Dorsolateral prefrontal cortex (tissue), 120 donors: ENCODE measurements at regions of chr7 and their contacts with region 1.

Region 1: GRCh38 chr7:151181011-151181431 is 6.0 kb downstream of the ASB10 start:
- DNase-seq: peak in 3 of 10 donors; percentile 18 to 40 (median 24)
- H3K4me3 ChIP-seq: no peak overlapping the region
- H3K27ac ChIP-seq: no peak overlapping the region
- H3K27me3 ChIP-seq: peaks cover 0 to 5% (median 0%) of the 10 kb centered on the region in 45 donors
- CTCF ChIP-seq: no peak

Region 2: GRCh38 chr7:151110941-151111645 is 69.9 kb before region 1 on chr7:
- intact Hi-C with region 1: no loop called
- DNase-seq: peak; percentile 65 to 86 (median 77)
- H3K4me3 ChIP-seq: peak overlapping the region in 5 of 59 donors; percentile 7 to 29 (median 10)
- H3K27ac ChIP-seq: peak overlapping the region in 7 of 59 donors; percentile 2 to 44 (median 16)
- H3K27me3 ChIP-seq: no peaks in the 10 kb centered on the region
- CTCF ChIP-seq: peak; percentile 63 to 96 (median 91)

Region 3: DNA sequence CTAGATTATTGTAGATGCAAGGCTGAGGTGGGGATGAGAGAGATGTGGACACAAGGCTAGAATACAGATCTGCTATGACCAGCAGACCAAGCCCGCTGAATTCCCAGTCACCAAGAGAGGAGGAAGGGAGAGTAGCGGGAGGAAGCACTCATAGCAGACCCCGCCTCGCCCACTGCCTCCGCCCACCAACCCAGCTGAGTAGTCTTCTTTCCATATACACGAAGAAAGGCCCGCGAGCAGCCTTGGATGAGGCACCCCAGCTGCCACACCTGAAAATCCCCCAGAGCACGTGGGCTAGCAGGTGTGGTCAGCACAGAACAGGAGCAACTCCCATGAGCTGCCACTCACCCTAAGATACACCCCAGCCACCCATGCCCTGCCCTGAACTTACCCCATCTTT is 37.1 kb after region 1 on chr7:
- intact Hi-C with region 1: loop called in 1 of 2 experiments (anchors 5 kb)
- DNase-seq: no peak
- H3K4me3 ChIP-seq: no peak overlapping the region
- H3K27ac ChIP-seq: no peak overlapping the region
- H3K27me3 ChIP-seq: no peaks in the 10 kb centered on the region
- CTCF ChIP-seq: no peak